ENCODE measurements at regions of chr11 and their contacts with region 1.

Region 1: GRCh38 chr11:8964324-8965320 is at the start of gene TMEM9B:
- DNase-seq: peak; percentile 87 to 92
- ATAC-seq: peak; percentile 93 to 94
- H3K4me3 ChIP-seq: peak within 1 kb of the TSS; percentile 78
- H3K27ac ChIP-seq: peak within 1 kb of the TSS; percentile 96
- H3K4me1 ChIP-seq: peaks cover 23% of the 10 kb centered on the region
- CTCF ChIP-seq: no peak
- EP300 ChIP-seq: no peak
- POLR2A ChIP-seq: peak; percentile 65
- RAD21 ChIP-seq: no peak; a peak in 1 of 5 replicates
- polyA plus RNA-seq, gene TMEM9B: 43.4 and 47.3 TPM in 2 replicates

Region 2: DNA sequence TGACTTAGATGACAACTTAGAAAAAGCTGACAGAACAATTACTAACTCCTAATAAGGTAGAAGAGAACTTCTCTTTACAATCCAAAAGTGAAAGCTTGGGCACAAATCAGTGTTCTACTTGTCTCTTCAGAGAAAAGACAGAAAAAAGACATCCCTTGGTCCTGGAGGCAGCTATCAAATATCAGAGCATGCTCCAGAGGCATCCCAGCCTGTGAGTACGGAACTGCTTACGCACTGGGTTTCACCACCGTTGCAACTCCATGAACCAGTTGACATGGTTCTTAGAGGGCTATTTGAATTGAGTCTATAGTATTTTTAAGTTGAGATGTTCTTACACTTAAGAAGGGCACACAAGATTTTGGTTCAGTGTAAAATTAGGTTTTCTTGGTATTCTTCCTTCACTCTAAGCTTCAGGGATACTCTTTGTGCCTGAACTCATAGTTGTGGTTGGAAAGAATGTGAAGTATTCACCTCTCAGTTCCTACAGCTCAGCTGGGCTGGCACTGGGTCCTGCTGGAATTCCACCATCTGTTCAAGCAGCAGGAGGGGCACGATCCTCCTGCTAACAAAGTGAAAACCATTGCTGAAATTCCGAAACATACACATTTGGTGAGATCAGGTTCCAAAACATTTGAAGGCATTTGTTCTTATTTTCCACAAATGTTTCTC is 47.3 kb before region 1 on chr11:
- CTCF ChIA-PET with region 1: interaction called, 63 read pairs
- POLR2A ChIA-PET with region 1: interaction called, 5 read pairs
- DNase-seq: no peak
- ATAC-seq: peak in 1 of 2 experiments; percentile 55; a peak in 1 of 6 replicates
- H3K4me3 ChIP-seq: no peak overlapping the region
- H3K27ac ChIP-seq: no peak overlapping the region
- H3K4me1 ChIP-seq: peaks cover 23% of the 10 kb centered on the region
- CTCF ChIP-seq: no peak
- EP300 ChIP-seq: no peak
- POLR2A ChIP-seq: no peak
- RAD21 ChIP-seq: no peak

Region 3: GRCh38 chr11:8922691-8923090 is 41.9 kb before region 1 on chr11:
- CTCF ChIA-PET with region 1: interaction called, 19 read pairs
- POLR2A ChIA-PET with region 1: no interaction called
- DNase-seq: no peak
- ATAC-seq: no peak
- H3K4me3 ChIP-seq: no peak overlapping the region
- H3K27ac ChIP-seq: no peak overlapping the region
- H3K4me1 ChIP-seq: no peaks in the 10 kb centered on the region
- CTCF ChIP-seq: no peak
- EP300 ChIP-seq: no peak
- POLR2A ChIP-seq: no peak
- RAD21 ChIP-seq: no peak

Region 4: GRCh38 chr11:8934749-8935478 is 29.7 kb before region 1 on chr11:
- CTCF ChIA-PET with region 1: interaction called, 14 read pairs
- POLR2A ChIA-PET with region 1: interaction called, 3 read pairs
- DNase-seq: peak in 1 of 2 experiments; percentile 48
- ATAC-seq: peak; percentile 83
- H3K4me3 ChIP-seq: no peak overlapping the region
- H3K27ac ChIP-seq: peak overlapping the region in 1 of 2 experiments; percentile 49; a peak in 2 of 6 replicates
- H3K4me1 ChIP-seq: peaks cover 11% of the 10 kb centered on the region
- CTCF ChIP-seq: no peak
- EP300 ChIP-seq: no peak
- POLR2A ChIP-seq: no peak
- RAD21 ChIP-seq: no peak

Region 5: GRCh38 chr11:8948886-8949285 is 15.7 kb before region 1 on chr11:
- CTCF ChIA-PET with region 1: interaction called, 18 read pairs
- POLR2A ChIA-PET with region 1: interaction called, 4 read pairs
- DNase-seq: no peak
- ATAC-seq: no peak
- H3K4me3 ChIP-seq: no peak overlapping the region
- H3K27ac ChIP-seq: no peak overlapping the region
- H3K4me1 ChIP-seq: no peaks in the 10 kb centered on the region
- CTCF ChIP-seq: no peak
- EP300 ChIP-seq: no peak
- POLR2A ChIP-seq: no peak
- RAD21 ChIP-seq: no peak